Dorsolateral prefrontal cortex (tissue), 120 donors: ENCODE measurements at regions of chr12 and their contacts with region 1.

Region 1: DNA sequence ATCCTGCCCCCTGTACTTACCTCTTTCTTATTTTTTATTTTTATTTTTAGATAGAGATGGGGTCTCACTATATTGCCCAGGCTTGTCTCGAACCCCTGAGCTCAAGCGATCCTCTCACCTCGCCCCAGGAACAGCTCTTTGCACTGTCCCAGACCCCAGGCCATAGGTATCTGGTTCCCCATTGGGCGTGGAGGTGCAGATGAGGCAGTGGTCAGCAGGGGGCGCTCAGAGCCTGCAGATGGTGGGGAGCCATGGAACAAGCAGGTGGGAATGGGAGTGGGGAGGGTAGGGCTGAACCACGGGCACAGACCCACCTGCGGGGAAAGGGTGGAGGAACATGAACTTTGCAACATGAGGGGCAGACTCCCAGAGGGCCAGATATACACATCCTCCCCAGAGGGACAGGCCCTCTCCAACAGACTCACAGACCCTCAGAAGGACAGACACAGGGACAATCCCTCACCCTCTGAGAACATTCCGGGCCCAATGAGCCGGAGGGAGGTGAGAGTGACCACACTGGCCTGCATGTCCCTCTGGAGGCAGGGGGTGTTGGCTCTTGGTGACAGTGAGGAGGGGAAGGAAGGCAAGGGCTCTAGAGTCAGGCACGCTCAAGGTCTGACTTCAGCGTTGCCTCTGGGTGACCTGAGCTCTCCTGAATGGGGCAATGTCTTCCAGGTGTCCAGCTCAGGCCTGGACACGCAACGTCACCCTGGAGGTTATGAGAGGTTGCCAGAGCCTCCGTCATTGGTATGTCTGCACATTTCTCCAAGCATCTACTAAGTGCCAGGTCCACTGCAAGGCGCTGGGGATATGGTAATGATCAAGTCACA is 34.9 kb downstream of the KRT80 start:
- DNase-seq: peak; percentile 69 to 85 (median 78)
- H3K4me3 ChIP-seq: no peak overlapping the region
- H3K27ac ChIP-seq: no peak overlapping the region
- H3K27me3 ChIP-seq: peaks cover 0 to 19% (median 4%) of the 10 kb centered on the region in 45 donors
- CTCF ChIP-seq: peak; percentile 64 to 99 (median 95)

Region 2: DNA sequence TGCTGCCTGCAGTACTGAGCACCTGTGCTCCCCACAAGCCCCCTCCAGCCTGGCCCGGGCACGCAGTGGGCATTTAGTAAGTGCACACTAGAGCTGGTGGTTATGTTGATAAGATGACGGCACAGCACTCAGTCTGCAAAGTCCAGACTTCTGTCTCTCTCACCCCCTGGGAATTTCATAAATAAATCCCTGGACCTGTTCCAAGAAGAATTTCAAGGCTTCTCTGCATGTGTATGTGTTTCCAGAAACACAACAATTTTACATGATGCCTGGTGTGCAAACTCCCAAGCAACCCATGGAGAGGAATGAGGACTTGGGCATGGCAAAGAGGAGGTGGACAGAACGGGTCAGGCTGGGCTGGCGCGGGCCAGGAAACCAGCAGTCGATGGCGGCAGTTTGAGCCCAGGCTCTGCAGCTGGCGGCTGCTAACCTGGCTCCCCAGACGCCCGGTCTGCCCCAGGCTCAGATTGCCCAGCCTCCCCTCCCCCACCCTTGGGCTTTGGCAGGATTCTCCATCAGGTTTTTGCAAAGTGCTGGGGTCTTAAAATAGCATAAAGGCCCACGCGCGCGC is 215.9 kb before region 1 on chr12:
- intact Hi-C with region 1: no loop called
- DNase-seq: no peak
- H3K4me3 ChIP-seq: peak overlapping the region in 1 of 59 donors; percentile 10
- H3K27ac ChIP-seq: no peak overlapping the region
- H3K27me3 ChIP-seq: no peaks in the 10 kb centered on the region
- CTCF ChIP-seq: no peak

Region 3: GRCh38 chr12:52175371-52176350 is 18.7 kb after region 1 on chr12:
- intact Hi-C with region 1: no loop called
- DNase-seq: no peak
- H3K4me3 ChIP-seq: no peak overlapping the region
- H3K27ac ChIP-seq: peak overlapping the region in 1 of 59 donors; percentile 6
- H3K27me3 ChIP-seq: no peaks in the 10 kb centered on the region
- CTCF ChIP-seq: no peak

Region 4: GRCh38 chr12:52213512-52214420 is 56.8 kb after region 1 on chr12:
- intact Hi-C with region 1: loop called (anchors 1 to 2 kb)
- DNase-seq: peak; percentile 35 to 82 (median 60)
- H3K4me3 ChIP-seq: no peak overlapping the region
- H3K27ac ChIP-seq: no peak overlapping the region
- H3K27me3 ChIP-seq: peaks cover 0 to 5% (median 0%) of the 10 kb centered on the region in 45 donors
- CTCF ChIP-seq: peak; percentile 38 to 98 (median 89)

Region 5: GRCh38 chr12:52327052-52327829 is 170.3 kb after region 1 on chr12:
- intact Hi-C with region 1: loop called (anchors 2 to 5 kb)
- DNase-seq: peak; percentile 53 to 86 (median 78)
- H3K4me3 ChIP-seq: no peak overlapping the region
- H3K27ac ChIP-seq: no peak overlapping the region
- H3K27me3 ChIP-seq: peaks cover 0 to 8% (median 0%) of the 10 kb centered on the region in 45 donors
- CTCF ChIP-seq: peak; percentile 36 to 97 (median 90)

Region 6: DNA sequence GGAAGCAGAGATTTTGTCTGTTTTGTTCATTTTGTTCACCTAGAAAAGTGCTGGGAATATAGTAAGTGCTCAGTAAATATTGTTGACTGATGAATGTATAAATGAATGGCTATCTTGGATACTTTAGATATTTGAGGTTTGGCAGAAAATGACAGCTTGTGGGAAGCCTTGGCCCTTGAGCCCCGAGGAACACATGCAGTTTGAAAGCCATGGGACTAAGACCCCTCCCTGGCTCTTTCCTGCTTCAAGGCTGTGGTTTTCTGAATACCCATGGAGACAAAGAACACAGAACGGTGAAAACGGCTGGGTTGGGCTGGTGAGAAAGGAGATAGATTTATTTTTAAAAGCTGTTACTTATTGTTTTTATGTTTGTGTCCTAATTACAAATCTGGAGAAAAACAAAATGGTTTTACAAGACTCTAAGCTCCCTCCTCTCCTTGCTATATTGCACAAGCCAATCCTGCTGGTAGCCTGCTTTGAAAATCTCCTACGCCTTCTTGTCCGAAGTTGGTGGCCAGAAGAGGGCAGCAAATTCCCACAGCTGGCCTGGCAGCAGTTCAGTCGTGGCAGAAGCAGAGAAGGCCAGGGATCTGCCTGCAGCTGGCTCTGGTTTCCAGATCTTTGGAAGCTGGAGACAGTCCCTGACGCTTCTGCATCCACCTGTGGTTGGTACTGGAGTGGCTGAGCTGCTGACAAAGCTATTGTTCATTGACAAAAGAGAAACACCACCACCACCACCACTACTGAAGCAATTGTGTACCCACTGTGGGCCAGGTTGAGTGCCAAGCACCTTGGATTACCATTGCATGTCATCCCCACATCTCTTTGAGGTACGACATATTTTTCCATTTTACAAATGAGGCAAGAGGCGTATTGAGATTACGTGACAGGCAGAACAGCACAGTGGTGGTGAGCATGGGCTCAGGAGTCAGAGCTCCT is 215.5 kb after region 1 on chr12:
- intact Hi-C with region 1: loop called in 1 of 2 experiments (anchors 2 kb)
- DNase-seq: peak; percentile 34 to 89 (median 85)
- H3K4me3 ChIP-seq: no peak overlapping the region
- H3K27ac ChIP-seq: peak overlapping the region in 17 of 59 donors; percentile 2 to 72 (median 36)
- H3K27me3 ChIP-seq: peaks cover 0 to 2% (median 0%) of the 10 kb centered on the region in 45 donors
- CTCF ChIP-seq: peak; percentile 57 to 95 (median 85)

Region 7: DNA sequence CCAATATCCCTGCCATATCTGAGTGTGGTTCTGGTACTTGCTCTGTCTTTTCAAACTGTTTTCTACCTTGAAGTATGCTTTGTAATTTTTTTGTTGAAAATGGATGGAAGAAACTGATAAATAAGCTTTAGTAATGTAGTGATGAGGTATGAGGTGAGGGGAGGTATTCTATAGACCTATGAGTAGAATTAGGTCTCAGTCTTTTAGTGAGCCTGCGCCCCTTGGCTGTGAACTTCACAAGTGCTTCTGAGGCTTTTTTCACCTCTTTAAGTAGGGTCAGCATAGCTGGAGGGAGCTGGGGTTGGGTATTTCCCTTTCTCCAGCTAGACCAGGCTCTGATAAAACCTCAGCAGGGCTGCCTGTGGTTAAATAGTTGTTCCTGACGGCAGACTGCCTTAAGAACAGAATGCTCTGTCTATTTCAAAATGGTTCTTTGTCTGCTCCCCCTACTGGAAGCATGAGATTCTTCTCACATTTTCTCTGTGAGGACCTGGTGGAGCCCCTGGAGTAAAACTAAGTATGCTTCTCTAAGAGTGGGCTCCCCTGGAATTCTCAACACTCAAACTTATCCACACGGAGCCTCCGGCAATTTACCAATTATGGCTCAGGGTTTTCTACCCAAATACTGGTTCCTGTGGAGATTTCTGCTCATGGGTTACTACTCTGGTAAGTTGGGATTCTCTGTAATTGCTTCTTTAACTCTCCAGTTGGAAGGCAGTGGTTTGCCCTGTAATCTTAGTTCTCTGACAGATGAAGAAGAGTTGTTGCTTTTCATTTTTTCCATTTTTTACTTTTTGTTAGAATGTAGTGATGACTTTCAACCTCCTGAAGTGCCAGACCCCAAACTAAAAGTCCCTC is 350.1 kb after region 1 on chr12:
- intact Hi-C with region 1: loop called in 1 of 2 experiments (anchors 10 kb)
- DNase-seq: no peak
- H3K4me3 ChIP-seq: no peak overlapping the region
- H3K27ac ChIP-seq: no peak overlapping the region
- H3K27me3 ChIP-seq: peaks cover 0 to 3% (median 0%) of the 10 kb centered on the region in 45 donors
- CTCF ChIP-seq: peak in 55 of 56 donors; percentile 27 to 72 (median 58)

Region 8: GRCh38 chr12:52879394-52880351 is 722.7 kb after region 1 on chr12:
- intact Hi-C with region 1: loop called (anchors 1 to 5 kb)
- DNase-seq: peak; percentile 55 to 82 (median 74)
- H3K4me3 ChIP-seq: peak overlapping the region in 52 of 59 donors; percentile 4 to 58 (median 38)
- H3K27ac ChIP-seq: peak overlapping the region in 13 of 59 donors; percentile 1 to 76 (median 41)
- H3K27me3 ChIP-seq: peaks cover 0 to 9% (median 0%) of the 10 kb centered on the region in 45 donors
- CTCF ChIP-seq: peak; percentile 24 to 90 (median 74)

Region 9: DNA sequence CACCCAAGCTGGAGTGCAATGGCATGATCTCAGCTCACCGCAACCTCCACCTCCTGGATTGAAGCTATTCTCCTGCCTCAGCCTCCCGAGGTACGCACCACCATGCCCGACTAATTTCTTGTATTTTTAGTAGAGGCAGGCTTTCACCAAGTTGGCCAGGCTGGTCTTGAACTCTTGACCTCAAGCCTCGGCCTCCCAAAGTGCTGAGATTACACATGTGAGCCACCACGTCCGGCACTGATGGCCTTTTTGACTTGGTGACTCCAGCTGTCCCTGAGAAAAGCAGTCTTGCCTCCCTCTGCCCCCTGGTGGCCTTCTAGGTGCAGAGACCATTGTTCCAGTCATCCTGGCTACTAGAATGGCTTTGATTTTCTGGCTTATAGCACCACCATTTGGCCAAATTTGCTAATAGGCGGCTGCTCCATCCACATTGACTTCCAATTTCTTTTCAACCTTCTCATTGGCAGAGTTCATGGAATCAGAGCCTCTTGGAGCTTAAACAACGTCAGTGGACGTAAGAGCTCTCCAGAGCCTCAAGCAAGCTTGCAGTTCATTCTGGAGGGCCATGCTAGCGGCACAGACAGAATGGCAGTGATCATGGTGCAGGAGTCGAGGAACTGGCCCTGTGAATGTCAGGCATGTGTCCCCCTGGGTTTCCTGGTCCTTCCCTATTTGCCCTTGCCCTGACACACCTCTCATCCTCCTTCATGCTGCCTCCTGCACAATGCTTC is 823.9 kb after region 1 on chr12:
- intact Hi-C with region 1: loop called (anchors 5 to 10 kb)
- DNase-seq: peak; percentile 76 to 93 (median 84)
- H3K4me3 ChIP-seq: no peak overlapping the region
- H3K27ac ChIP-seq: no peak overlapping the region
- H3K27me3 ChIP-seq: peaks cover 0 to 4% (median 0%) of the 10 kb centered on the region in 45 donors
- CTCF ChIP-seq: peak; percentile 84 to 100 (median 98)